ENCODE measurements at regions of chr11 and their contacts with region 1.

Region 1: DNA sequence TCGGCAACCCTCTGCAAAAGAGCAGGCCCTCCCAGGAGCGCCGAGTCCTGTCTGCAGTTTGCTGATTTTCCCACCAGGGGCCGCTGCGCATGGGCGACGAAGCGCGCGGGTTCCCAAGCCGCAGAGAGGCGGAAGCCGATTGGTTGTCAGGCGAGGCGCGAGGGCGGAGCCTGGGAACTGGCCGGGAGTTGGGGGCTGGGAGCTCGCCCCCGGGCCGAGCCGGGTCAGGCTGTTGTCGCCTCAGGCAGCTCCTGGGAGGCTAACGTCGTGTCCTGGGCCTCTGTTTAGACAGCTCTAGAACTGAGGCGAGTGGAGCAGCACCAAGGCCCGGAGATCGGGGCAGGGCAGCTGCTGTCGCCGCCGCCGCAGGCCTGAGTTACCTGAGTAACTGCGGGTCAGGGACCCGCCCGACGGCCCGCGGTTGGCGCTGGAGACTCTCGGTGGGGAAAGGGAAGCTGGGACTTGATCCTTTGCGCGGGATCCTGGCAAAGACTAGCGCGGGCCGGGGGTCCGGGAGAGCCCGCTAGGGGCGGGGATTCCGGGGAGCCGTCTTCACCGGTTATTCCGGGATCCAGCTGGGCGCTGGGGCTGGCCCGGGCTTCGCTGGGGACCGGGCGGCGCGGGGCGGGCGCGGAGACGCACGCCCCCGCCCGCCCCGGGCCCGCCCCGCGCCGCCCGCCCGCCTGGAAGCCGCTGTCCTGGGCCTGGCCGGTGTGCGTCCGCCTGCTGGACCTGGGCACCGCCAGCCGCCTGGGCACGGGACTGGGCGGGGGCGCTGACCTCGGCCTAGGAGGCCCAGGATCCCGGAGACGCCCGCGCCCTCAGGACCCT is at the start of gene STIM1:
- DNase-seq: peak; percentile 94
- H3K4me3 Mint-ChIP-seq: peak within 1 kb of the TSS; percentile 99
- H3K27ac Mint-ChIP-seq: peak within 1 kb of the TSS; percentile 87
- H3K4me1 Mint-ChIP-seq: peaks cover 30% of the 10 kb centered on the region
- H3K27me3 Mint-ChIP-seq: no peaks in the 10 kb centered on the region
- CTCF ChIP-seq: peak; percentile 95
- total RNA-seq, gene STIM1: 41.2 and 56.2 TPM in 2 replicates

Region 2: DNA sequence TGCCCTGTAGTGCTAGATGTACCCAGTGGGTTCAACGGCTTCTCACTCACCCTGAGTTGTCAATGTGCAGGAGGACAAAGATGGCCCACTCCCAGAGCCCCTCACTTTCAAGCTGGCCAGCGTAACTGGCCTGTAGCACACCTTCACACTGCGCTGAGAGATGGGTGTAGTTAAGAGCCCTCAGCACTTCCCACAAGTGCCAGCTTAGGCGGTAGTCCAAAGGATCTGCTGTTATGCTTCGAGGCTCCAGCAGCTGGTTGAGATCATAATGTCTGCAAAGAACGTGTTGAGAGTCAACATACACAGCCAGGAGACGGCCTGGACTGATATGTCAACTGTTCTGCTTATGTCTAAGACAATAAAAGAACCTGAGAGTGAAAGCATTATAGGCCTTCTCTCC is 169.3 kb before region 1 on chr11:
- CTCF ChIA-PET with region 1: no interaction called
- POLR2A ChIA-PET with region 1: no interaction called
- intact Hi-C with region 1: no loop called
- DNase-seq: no peak
- H3K4me3 Mint-ChIP-seq: no peak overlapping the region
- H3K27ac Mint-ChIP-seq: peak overlapping the region; percentile 8
- H3K4me1 Mint-ChIP-seq: no peaks in the 10 kb centered on the region
- H3K27me3 Mint-ChIP-seq: no peaks in the 10 kb centered on the region
- CTCF ChIP-seq: no peak

Region 3: GRCh38 chr11:3841426-3842350 is 13.5 kb before region 1 on chr11:
- CTCF ChIA-PET with region 1: interaction called, 49 read pairs
- POLR2A ChIA-PET with region 1: interaction called, 45 read pairs
- intact Hi-C with region 1: no loop called
- DNase-seq: peak; percentile 88
- H3K4me3 Mint-ChIP-seq: peak overlapping the region; percentile 80
- H3K27ac Mint-ChIP-seq: peak overlapping the region; percentile 62
- H3K4me1 Mint-ChIP-seq: peaks cover 22% of the 10 kb centered on the region
- H3K27me3 Mint-ChIP-seq: no peaks in the 10 kb centered on the region
- CTCF ChIP-seq: peak; percentile 71

Region 4: DNA sequence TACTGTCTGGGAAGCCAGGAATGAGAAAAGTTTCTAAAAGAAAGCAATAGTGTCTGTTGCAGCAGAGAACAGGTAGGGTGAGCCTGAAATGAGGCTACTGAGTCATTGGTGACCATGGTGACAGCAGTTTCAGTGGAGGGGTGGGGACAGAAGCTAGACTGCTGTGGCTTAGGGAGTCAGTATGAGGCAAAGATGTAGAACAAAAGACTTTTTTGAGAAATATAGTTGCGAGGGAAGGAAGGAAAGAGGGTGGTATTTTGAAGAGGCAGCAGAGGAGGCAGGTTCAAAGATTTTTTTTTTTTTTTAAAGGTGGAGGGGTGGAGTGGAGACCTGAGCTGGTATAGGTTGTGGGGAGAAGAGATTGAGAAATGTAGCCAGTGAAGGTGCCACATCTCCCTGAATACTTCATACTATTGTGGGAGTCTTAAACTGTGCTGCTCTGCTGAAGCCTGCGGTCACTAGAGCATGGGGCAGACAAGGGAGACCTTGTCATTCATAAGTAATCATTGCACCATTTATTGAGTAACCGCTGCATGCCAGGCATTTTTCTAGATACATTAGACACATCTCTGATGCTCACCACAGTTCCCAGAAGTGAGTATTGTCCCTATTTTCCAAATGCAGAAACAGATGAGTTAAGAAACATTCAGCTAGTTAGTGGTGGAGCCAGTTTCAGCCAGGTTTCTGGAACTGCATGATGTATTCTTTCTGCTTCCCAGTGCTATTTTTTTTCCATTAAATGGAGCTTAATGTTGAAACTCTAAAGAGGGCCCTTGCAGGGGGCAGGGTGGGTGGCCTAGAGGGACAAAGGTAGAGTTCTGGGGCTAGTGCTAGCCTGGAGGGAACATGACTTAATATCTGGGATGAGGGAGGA is 50.1 kb after region 1 on chr11:
- CTCF ChIA-PET with region 1: interaction called, 46 read pairs
- POLR2A ChIA-PET with region 1: interaction called, 22 read pairs
- intact Hi-C with region 1: loop called (anchors 2 kb)
- DNase-seq: peak; percentile 89
- H3K4me3 Mint-ChIP-seq: peak overlapping the region; percentile 28
- H3K27ac Mint-ChIP-seq: peak overlapping the region; percentile 67
- H3K4me1 Mint-ChIP-seq: peaks cover 30% of the 10 kb centered on the region
- H3K27me3 Mint-ChIP-seq: no peaks in the 10 kb centered on the region
- CTCF ChIP-seq: no peak

Region 5: DNA sequence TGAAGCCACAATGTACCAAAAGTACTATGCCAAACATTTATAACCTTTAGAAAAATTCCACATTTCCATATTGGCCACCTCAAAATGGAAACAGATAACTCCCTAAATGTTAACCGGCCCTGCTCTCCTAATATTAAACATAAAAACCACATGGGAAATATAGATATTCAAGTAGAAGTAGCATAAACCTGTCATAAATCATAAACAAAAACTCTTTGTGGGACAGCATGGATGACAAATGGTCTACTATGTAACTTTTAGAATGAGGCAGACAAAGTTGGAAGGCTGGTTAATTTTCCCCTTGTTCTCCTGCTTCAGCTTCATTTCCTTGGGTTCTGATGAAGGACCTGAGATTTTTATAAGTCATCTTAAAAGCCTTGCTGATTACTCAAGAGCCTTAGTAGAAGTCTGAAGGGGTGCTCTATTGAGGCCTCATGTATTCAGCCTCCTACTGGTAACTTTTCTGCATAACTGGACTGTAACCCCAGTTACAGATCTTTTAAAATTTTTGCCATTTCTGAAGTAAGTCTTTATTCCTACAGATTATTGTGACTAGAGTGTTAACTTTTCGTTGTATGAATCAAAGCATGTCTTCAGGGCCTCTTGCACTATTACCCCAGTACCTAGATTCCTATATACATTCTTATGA is 116.7 kb after region 1 on chr11:
- CTCF ChIA-PET with region 1: interaction called, 9 read pairs
- POLR2A ChIA-PET with region 1: interaction called, 5 read pairs
- intact Hi-C with region 1: loop called (anchors 10 kb)
- DNase-seq: no peak
- H3K4me3 Mint-ChIP-seq: no peak overlapping the region
- H3K27ac Mint-ChIP-seq: no peak overlapping the region
- H3K4me1 Mint-ChIP-seq: no peaks in the 10 kb centered on the region
- H3K27me3 Mint-ChIP-seq: no peaks in the 10 kb centered on the region
- CTCF ChIP-seq: no peak

Region 6: GRCh38 chr11:4044976-4045646 is 189.9 kb after region 1 on chr11:
- CTCF ChIA-PET with region 1: interaction called, 60 read pairs
- POLR2A ChIA-PET with region 1: interaction called, 17 read pairs
- intact Hi-C with region 1: no loop called
- DNase-seq: peak; percentile 57
- H3K4me3 Mint-ChIP-seq: no peak overlapping the region
- H3K27ac Mint-ChIP-seq: peak overlapping the region; percentile 64
- H3K4me1 Mint-ChIP-seq: peaks cover 24% of the 10 kb centered on the region
- H3K27me3 Mint-ChIP-seq: no peaks in the 10 kb centered on the region
- CTCF ChIP-seq: no peak

Measured in MCF 10A (cell line).